Heart right ventricle (tissue), 16 donors: ENCODE measurements at regions of chr17 and their contacts with region 1.

Region 1: DNA sequence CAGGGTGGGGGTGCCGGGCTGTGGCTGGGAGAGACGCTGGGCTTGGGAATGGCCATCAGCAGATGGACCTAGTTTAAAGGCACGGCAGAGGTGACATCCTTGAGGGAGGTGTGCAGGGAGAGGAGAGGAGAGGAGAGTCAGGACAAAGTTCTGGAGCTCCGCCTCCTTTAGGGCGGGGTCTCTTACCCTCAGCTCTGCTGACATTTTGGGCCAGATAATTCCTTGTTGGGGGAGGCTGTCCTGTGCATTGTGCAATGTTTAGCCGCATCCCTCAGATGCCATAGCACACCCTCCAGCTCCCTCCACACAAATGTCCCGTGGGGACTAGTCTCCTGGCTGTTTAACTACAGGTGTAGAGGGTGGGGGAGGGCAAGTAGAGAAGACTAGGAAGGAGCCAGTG is 48.3 kb downstream of the ARHGAP23 start:
- DNase-seq: no peak
- ATAC-seq: no peak
- H3K4me3 ChIP-seq: no peak overlapping the region
- H3K27ac ChIP-seq: no peak overlapping the region
- H3K4me1 ChIP-seq: no peaks in the 10 kb centered on the region
- H3K27me3 ChIP-seq: no peaks in the 10 kb centered on the region
- CTCF ChIP-seq: no peak

Region 2: GRCh38 chr17:38361694-38362465 is 114.7 kb before region 1 on chr17:
- intact Hi-C with region 1: no loop called
- DNase-seq: no peak
- ATAC-seq: no peak
- H3K4me3 ChIP-seq: no peak overlapping the region
- H3K27ac ChIP-seq: no peak overlapping the region
- H3K4me1 ChIP-seq: peaks cover under 1 to 49% (median 28%) of the 10 kb centered on the region in 9 donors
- H3K27me3 ChIP-seq: no peaks in the 10 kb centered on the region
- CTCF ChIP-seq: no peak

Region 3: GRCh38 chr17:38444151-38444550 is 32.4 kb before region 1 on chr17:
- intact Hi-C with region 1: loop called in 3 of 10 experiments (anchors 5 kb)
- DNase-seq: peak; percentile 73 to 75
- ATAC-seq: peak; percentile 63 to 78 (median 70)
- H3K4me3 ChIP-seq: peak overlapping the region in 3 of 10 donors; percentile 9 to 17 (median 13)
- H3K27ac ChIP-seq: peak overlapping the region in 7 of 10 donors; percentile 70 to 91 (median 81)
- H3K4me1 ChIP-seq: peaks cover 17 to 81% (median 65%) of the 10 kb centered on the region in 9 donors
- H3K27me3 ChIP-seq: no peaks in the 10 kb centered on the region
- CTCF ChIP-seq: peak; percentile 80 to 96 (median 88)

Region 4: DNA sequence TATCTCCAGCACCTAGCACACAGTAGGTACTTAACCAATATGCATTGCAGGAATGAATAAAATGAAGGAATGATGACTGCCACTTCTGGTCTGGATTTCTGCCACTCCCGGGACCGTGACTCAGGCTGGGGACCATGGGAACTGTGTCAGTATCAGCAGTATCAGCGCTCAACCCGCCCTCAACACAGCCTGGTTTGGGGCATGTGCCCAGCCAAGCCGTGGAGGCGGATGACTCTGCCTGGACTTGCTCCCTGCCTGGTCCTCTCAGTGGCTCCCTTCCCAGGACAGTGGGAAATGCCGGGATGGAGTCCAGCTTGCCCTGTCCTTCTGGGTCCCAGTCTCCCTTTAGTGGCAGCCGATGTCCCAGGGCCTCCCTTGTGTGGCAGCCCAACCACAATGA is 74.1 kb after region 1 on chr17:
- intact Hi-C with region 1: no loop called
- DNase-seq: peak; percentile 56 to 63
- ATAC-seq: peak; percentile 52 to 95 (median 90)
- H3K4me3 ChIP-seq: no peak overlapping the region
- H3K27ac ChIP-seq: peak overlapping the region in 2 of 10 donors; percentile 15 to 25
- H3K4me1 ChIP-seq: peaks cover 0 to 10% (median 0%) of the 10 kb centered on the region in 9 donors
- H3K27me3 ChIP-seq: peaks cover 0 to 50% (median 18%) of the 10 kb centered on the region in 7 donors
- CTCF ChIP-seq: no peak